Right ventricle myocardium inferior (tissue), 1 donor: ENCODE measurements at regions of chr11 and their contacts with region 1.

Region 1: DNA sequence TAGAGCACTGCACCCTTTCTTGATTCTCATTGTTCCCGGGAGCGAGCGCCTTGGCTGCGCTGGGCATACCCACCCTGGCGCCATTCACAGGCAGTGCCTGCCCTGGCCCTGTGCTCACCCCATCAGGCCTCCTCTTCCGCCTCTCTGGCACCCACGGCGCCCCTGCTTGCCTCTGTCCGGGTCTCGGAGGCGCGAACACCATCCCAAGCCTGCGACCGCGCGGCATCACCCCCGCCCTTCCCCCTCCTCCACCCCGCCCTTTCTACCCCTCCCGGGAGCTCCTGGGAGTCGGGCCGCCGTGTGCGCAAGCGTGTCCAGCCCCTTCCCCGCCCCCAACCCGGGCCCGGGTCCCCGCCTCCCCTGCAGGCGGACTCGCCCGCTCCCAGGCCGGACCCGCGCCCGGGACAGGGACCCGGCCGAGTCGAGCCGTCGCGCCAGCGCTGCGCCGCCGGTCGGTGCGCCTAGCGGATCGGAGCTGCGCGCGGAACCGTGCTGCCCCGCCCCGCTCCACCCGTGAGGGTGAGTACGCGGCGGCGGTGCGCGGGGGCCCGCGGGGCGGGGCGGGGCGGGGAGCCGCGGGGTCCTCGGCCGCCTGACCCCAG is at the start of gene ST3GAL4:
- DNase-seq: peak; percentile 94
- ATAC-seq: peak; percentile 81
- total RNA-seq, gene ST3GAL4: 45.1 TPM

Region 2: DNA sequence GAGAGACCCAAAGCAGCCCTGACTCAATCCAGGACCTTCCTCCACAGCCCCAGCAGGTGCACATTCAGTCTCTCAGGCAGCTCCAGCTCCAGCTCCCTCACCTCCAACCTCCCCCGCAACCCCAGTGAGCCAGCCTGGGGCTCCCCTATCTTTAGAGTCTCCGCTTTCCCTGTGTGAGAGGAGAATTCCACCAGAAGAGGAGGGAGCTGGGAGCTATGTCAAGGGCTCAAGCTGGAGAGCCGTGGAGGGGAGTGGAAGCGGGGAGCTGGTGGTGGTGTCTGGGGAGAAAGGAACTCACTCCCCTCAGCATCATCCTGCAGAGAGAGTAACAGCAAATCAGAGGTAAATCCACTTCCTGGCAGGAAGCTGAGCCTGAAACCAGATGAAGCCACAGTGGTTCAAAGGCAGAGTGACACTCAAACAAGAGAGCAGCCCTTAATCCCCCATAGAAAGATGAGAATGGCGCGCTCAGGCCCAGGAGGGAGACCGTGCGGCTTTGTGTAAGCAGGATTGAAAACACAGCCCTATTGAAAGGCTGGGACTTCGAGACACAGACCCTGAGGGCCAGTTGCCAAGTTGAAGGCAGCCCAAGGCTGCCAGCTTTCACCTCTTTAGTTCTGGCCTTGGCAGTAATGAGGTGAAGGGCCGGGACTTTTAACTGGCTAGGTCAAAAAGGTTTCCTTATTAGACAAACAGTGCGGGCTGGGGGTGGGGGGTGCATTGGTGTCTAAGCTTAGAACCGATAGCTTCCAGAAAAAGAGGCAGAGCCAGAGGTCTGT is 271.4 kb before region 1 on chr11:
- intact Hi-C with region 1: no loop called
- DNase-seq: no peak
- ATAC-seq: no peak

Region 3: GRCh38 chr11:126318574-126319373 is 36.7 kb before region 1 on chr11:
- intact Hi-C with region 1: loop called (anchors 5 kb)
- DNase-seq: no peak
- ATAC-seq: peak; percentile 88

Region 4: GRCh38 chr11:126391970-126392639 is 36.7 kb after region 1 on chr11:
- intact Hi-C with region 1: loop called (anchors 5 kb)
- DNase-seq: no peak
- ATAC-seq: peak; percentile 21

Region 5: DNA sequence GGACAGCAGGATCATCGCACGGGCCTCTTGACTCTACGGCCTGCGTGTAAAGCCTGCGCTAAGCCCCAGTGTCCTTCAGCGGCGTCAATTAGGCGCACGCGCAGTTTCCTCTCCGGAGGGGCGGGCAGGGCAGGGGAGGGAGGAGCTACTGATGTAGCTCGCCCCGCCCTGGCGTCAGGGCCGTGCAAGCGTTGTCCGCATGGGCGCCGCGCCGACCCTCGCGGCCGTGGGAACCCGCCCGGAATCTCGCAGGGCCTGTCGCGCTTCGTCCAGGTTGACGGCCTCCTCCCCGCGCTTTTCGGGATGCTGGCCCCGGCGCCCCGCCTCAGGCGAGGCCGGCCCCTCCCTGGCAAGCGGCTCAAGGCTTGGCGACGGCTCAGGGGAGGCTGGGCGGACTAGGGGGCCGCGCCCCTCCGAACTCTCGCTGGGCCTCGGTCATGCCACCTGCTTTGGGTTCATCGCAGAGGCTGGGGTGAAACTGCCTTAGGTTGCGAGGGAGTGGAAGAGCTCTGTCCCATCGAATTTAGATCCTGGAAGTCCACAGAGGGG is 61.2 kb after region 1 on chr11:
- intact Hi-C with region 1: loop called (anchors 5 kb)
- DNase-seq: peak; percentile 96
- ATAC-seq: peak; percentile 77